Common myeloid progenitor, CD34-positive (primary cell): ENCODE measurements at regions of chr11 and their contacts with region 1.

Region 1: GRCh38 chr11:60169264-60169915 is 13.5 kb downstream of the MS4A6A start:
- DNase-seq: peak; percentile 69 to 91 (median 88)
- H3K4me3 ChIP-seq: no peak overlapping the region
- H3K27ac ChIP-seq: no peak overlapping the region
- H3K4me1 ChIP-seq: peaks cover 0 to 4% (median 0%) of the 10 kb centered on the region in 4 experiments
- H3K27me3 ChIP-seq: peaks cover 0 to 23% (median 4%) of the 10 kb centered on the region in 5 experiments

Region 2: GRCh38 chr11:60184824-60185511 is 15.6 kb after region 1 on chr11:
- CTCF ChIA-PET with region 1: interaction called, 32 read pairs
- POLR2A ChIA-PET with region 1: no interaction called
- DNase-seq: peak in 1 of 3 donors; percentile 26
- H3K4me3 ChIP-seq: no peak overlapping the region
- H3K27ac ChIP-seq: no peak overlapping the region
- H3K4me1 ChIP-seq: peaks cover 7 to 26% (median 20%) of the 10 kb centered on the region in 4 experiments
- H3K27me3 ChIP-seq: peaks cover 0 to 4% (median 1%) of the 10 kb centered on the region in 5 experiments